ENCODE measurements at regions of chr3 and their contacts with region 1.

Region 1: DNA sequence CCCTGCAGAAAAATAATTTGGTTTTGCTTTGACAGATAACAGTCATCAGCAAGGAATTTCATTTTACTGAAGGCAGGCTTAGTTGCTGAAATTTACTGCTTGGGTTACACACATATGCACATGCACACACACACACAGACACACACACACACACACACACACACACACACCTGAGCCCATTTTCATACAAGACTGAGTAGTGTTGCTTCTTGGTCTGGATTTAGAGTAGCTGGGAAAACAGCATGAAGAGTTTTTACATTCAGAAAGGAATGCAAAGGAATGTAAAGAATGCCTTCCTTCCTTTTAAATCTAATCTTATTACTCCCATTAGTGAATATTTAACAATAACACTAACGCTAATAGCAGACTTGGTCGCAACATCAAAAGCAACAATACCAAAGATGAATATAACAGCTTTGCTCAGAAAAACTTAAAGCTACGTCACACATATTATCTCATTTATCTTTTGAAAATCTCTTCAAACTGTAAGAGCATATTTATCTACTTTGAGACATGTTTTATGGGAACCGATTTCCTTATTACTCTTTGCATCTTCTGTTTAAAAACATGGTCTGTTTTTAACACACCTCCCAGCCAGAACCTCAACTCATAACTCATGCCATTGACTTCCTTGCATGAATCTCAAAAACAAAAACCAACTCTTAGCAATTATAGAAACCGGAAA is 32.5 kb downstream of the RFTN1 start:
- DNase-seq: peak; percentile 82
- H3K4me3 ChIP-seq: no peak overlapping the region
- H3K27ac ChIP-seq: no peak overlapping the region
- H3K4me1 ChIP-seq: peaks cover 35% of the 10 kb centered on the region
- H3K27me3 ChIP-seq: no peaks in the 10 kb centered on the region
- CTCF ChIP-seq: no peak

Region 2: DNA sequence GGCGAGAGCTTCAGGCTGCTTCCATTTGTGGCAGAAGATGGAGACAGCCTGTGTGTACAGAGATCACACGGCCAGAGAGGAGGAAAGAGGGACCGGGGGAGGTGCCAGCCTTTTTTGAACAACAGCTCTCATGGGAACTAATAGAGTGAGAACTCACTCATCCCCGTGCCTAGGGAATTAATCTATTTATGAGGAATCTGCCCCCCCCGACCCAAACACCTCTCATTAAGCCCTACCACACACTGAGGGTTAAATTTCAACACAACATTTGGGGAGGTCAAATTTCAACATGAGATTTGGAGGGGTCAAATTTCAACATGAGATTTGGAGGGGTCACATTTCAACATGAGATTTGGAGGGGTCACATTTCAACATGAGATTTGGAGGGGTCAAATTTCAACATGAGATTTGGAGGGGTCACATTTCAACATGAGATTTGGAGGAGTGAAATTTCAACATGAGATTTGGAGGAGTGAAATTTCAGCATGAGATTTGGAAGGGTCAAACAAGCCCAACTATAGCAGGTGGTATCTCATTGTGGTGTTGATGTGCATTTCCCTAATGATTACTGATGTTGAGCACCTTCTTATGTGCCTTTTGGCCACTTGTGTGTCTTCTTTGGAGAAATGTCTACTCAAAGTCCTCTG is 53.0 kb after region 1 on chr3:
- CTCF ChIA-PET with region 1: no interaction called
- POLR2A ChIA-PET with region 1: no interaction called
- intact Hi-C with region 1: loop called (anchors 2 kb)
- DNase-seq: no peak
- H3K4me3 ChIP-seq: no peak overlapping the region
- H3K27ac ChIP-seq: no peak overlapping the region
- H3K4me1 ChIP-seq: peaks cover 32% of the 10 kb centered on the region
- H3K27me3 ChIP-seq: no peaks in the 10 kb centered on the region
- CTCF ChIP-seq: no peak